ENCODE measurements at regions of chr16 and their contacts with region 1.

Region 1: DNA sequence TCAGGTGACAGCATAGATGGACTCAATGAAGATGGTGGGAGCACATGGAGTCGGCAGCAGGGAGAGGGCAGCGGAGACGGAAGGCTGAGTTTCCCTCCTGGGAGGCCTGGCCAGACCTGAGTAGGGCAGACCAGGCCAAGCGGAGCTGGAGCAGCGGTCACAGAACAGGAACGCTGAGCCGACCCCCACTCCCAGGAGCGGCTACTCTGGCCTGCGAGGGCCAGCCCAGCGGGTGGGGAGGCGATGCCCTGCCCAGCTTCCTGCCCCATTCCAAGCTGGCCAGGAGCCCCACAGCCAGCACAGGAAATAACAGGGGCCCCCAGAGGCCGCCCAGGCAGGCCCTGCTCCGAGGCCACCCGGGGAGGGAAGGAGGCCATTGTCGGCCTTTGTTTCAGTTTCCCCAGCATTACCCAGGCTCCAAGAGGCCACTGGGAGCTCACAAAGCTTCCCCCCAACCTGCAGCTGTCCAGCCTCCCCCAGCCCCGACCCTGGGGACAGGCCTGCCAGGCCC is 79.8 kb downstream of the ZNF423 start:
- DNase-seq: peak in 1 of 10 donors; percentile 44
- H3K4me3 ChIP-seq: peak overlapping the region in 1 of 59 donors; percentile 4
- H3K27ac ChIP-seq: peak overlapping the region in 11 of 59 donors; percentile 5 to 64 (median 21)
- H3K27me3 ChIP-seq: no peaks in the 10 kb centered on the region
- CTCF ChIP-seq: no peak

Region 2: GRCh38 chr16:49811644-49812334 is 35.6 kb after region 1 on chr16:
- intact Hi-C with region 1: loop called in 1 of 2 experiments (anchors 2 kb)
- DNase-seq: peak in 6 of 10 donors; percentile 34 to 72 (median 56)
- H3K4me3 ChIP-seq: no peak overlapping the region
- H3K27ac ChIP-seq: peak overlapping the region in 14 of 59 donors; percentile 8 to 56 (median 34)
- H3K27me3 ChIP-seq: no peaks in the 10 kb centered on the region
- CTCF ChIP-seq: no peak

Measured in dorsolateral prefrontal cortex (tissue), 120 donors.